Ascending aorta (tissue), 2 donors: ENCODE measurements at regions of chr19 and their contacts with region 1.

Region 1: DNA sequence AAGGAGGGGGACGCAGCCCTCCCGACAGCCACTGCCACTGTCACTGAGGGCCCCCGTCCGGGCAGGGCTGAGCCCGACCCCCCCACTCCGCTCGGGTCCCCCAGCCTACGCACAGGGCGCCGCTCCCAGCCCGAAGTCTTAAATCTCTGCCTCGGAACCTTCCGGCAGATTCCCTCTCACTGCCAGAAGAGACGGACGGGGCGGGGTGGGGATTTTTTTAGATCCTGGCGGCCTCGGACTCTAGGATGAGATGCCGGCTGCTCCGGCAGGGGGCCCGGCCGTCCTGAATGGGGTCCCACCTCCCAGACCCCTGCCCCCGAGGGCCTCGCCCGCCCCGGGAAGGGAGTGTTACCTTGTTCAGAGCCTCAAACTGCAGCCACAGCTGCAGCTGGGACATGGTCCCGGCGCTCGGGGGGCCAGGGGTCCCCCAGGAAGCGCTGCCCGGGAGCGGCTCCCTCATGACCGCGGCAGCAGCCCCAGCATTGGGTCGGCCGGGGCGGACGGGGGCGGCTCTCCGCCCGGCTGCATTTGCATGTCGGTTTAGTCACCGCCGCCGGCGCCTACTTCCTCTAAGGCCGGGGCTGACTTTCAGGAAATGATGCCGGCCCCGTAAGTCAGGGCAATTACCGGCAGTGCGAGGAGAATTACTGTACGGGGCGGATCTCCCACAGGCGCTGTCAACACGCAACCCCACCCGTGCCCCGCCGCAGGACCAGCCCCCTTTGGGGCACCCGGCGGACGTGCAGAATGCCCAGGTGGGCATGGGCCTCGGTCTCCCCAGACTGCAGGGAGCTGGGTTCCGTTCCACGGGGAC is 28.2 kb downstream of the GPX4 start:
- DNase-seq: peak; percentile 75 to 97
- H3K4me3 ChIP-seq: peak overlapping the region; percentile 61 to 74
- H3K27ac ChIP-seq: peak overlapping the region; percentile 91 to 96
- H3K4me1 ChIP-seq: peaks cover 8 to 34% of the 10 kb centered on the region in 2 donors
- H3K27me3 ChIP-seq: no peaks in the 10 kb centered on the region
- CTCF ChIP-seq: peak; percentile 5 to 40 (median 16)

Region 2: GRCh38 chr19:1045247-1045603 is 86.7 kb before region 1 on chr19:
- intact Hi-C with region 1: no loop called
- DNase-seq: no peak
- H3K4me3 ChIP-seq: no peak overlapping the region
- H3K27ac ChIP-seq: no peak overlapping the region
- H3K4me1 ChIP-seq: peaks cover 11 to 13% of the 10 kb centered on the region in 2 donors
- H3K27me3 ChIP-seq: no peaks in the 10 kb centered on the region
- CTCF ChIP-seq: no peak

Region 3: GRCh38 chr19:1154731-1155351 is 22.9 kb after region 1 on chr19:
- intact Hi-C with region 1: loop called (anchors 1 kb)
- DNase-seq: peak; percentile 76 to 95
- H3K4me3 ChIP-seq: peak overlapping the region; percentile 34 to 45
- H3K27ac ChIP-seq: peak overlapping the region; percentile 89 to 95
- H3K4me1 ChIP-seq: peaks cover 17 to 42% of the 10 kb centered on the region in 2 donors
- H3K27me3 ChIP-seq: no peaks in the 10 kb centered on the region
- CTCF ChIP-seq: no peak

Region 4: GRCh38 chr19:1173845-1174809 is 42.2 kb after region 1 on chr19 and contains the start of gene SBNO2:
- intact Hi-C with region 1: loop called (anchors 2 kb)
- DNase-seq: peak in 1 of 2 donors; percentile 93
- H3K4me3 ChIP-seq: peak within 1 kb of the TSS; percentile 87 to 93
- H3K27ac ChIP-seq: peak within 1 kb of the TSS; percentile 93 to 94
- H3K4me1 ChIP-seq: peaks cover 0 to 15% of the 10 kb centered on the region in 2 donors
- H3K27me3 ChIP-seq: no peaks in the 10 kb centered on the region
- CTCF ChIP-seq: no peak
- total RNA-seq, gene SBNO2: 120 TPM

Region 5: GRCh38 chr19:1275260-1275975 is 143.5 kb after region 1 on chr19 and contains the start of gene FAM174C:
- intact Hi-C with region 1: no loop called
- DNase-seq: peak; percentile 75 to 96
- H3K4me3 ChIP-seq: peak within 1 kb of the TSS; percentile 79 to 86
- H3K27ac ChIP-seq: peak within 1 kb of the TSS; percentile 94 to 99
- H3K4me1 ChIP-seq: peaks cover 32 to 51% of the 10 kb centered on the region in 2 donors
- H3K27me3 ChIP-seq: no peaks in the 10 kb centered on the region
- CTCF ChIP-seq: no peak
- total RNA-seq, gene FAM174C: 156 TPM